Left ventricle myocardium superior (tissue), 1 donor: ENCODE measurements at regions of chr7 and their contacts with region 1.

Region 1: GRCh38 chr7:32479574-32480200 is 10.5 kb downstream of the LSM5 start:
- DNase-seq: no peak
- ATAC-seq: no peak

Region 2: DNA sequence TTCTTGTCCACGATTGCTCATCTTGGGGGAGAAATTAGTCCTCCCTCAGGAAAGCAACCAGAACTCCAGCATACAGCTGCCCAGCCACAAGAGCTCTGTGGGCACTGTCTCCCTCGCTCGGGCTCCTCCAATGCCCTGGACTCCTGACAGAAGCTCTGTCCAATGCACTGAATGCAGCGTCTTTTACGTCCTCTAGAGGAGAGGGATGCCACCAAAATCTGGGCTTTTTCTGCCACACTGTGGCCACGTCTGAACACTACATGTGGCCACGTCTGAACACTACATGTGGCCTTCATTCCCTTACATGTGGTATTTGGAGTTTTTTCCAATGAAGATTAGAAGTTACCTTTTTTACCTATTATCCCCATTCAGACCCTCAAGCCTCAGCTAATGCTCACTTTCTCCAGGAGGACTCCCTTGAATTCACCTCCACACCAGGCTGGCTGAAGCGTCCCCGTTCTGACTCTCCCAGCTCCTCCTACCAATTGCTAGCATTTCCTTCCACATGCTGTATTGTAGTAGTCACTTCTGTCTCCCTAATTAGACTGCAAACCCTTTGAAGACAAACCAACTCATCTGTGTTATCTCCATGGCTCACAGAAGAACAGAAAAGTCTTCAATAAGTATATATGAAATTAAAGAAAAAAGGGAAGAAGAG is 275.2 kb before region 1 on chr7:
- intact Hi-C with region 1: loop called (anchors 5 kb)
- DNase-seq: peak; percentile 78
- ATAC-seq: peak; percentile 96